K562 (cell line): ENCODE measurements at regions of chr5 and their contacts with region 1.

Region 1: DNA sequence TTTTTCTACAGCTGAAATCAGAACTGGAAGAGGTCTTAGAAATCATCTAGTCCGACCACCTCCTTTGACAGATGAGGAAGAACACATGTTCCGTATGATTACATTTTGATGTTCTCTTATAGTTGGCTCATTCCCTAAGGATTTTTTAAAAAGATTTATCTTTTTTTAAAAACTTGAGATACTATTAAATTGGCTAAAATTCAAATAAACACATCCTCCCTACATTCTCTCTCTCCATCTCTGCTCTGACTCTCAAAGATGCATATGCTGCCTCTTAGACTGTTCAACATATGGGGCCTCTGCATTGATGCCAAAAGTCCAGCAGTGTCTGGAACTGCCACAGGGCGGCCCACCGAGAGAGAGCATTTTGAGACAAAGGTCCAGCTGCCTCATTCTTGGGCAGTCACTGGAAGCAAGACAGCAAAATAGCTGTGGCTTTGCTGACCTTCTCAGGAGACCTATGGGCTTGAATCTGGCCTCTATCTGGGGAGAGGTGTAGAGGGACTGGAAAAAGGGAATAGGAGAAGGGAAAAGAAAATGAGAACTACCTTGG is 12.8 kb upstream of the TSSK1B start:
- DNase-seq: peak in 2 of 4 experiments; percentile 21 to 34
- ATAC-seq: peak; percentile 87
- H3K4me3 ChIP-seq: no peak overlapping the region
- H3K27ac ChIP-seq: no peak overlapping the region
- H3K4me1 ChIP-seq: no peaks in the 10 kb centered on the region
- H3K27me3 ChIP-seq: no peaks in the 10 kb centered on the region; a peak in 1 of 5 replicates
- CTCF ChIP-seq: peak; percentile 39 to 51 (median 47)
- EP300 ChIP-seq: no peak
- POLR2A ChIP-seq: no peak
- RAD21 ChIP-seq: peak in 1 of 2 experiments; percentile 41; a peak in 3 of 4 replicates

Region 2: GRCh38 chr5:113495422-113495841 is 47.9 kb after region 1 on chr5:
- CTCF ChIA-PET with region 1: no interaction called
- POLR2A ChIA-PET with region 1: no interaction called
- in situ Hi-C with region 1: loop called (anchors 5 kb)
- intact Hi-C with region 1: no loop called
- DNase-seq: no peak
- ATAC-seq: no peak
- H3K4me3 ChIP-seq: no peak overlapping the region
- H3K27ac ChIP-seq: no peak overlapping the region
- H3K4me1 ChIP-seq: no peaks in the 10 kb centered on the region; a peak in 1 of 5 replicates
- H3K27me3 ChIP-seq: no peaks in the 10 kb centered on the region; a peak in 1 of 5 replicates
- CTCF ChIP-seq: no peak
- EP300 ChIP-seq: no peak
- POLR2A ChIP-seq: no peak
- RAD21 ChIP-seq: no peak

Region 3: DNA sequence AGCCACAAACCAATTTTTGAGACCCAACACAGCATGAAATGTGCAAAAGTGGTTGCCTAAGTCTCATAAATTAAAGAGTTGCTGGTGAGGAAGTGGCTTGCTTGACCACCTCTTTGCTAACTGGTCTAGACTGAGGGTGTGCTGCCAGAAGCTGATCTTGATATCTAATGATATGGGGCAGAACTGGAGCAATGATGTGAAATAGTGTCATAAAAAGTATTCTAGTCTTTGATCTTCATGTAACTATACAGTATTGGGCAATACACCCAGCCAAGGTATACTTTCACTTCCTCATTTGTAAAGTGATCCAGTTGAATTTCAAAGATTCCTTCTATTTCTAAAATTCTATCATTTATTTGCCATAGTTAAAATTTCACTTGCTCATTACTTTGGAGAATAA is 60.0 kb after region 1 on chr5:
- CTCF ChIA-PET with region 1: no interaction called
- POLR2A ChIA-PET with region 1: no interaction called
- in situ Hi-C with region 1: no loop called
- intact Hi-C with region 1: loop called (anchors 5 kb)
- DNase-seq: no peak
- ATAC-seq: no peak
- H3K4me3 ChIP-seq: no peak overlapping the region
- H3K27ac ChIP-seq: no peak overlapping the region
- H3K4me1 ChIP-seq: no peaks in the 10 kb centered on the region
- H3K27me3 ChIP-seq: peaks cover 0 to 8% of the 10 kb centered on the region in 2 experiments; a peak in 3 of 5 replicates
- CTCF ChIP-seq: no peak
- EP300 ChIP-seq: no peak
- POLR2A ChIP-seq: no peak
- RAD21 ChIP-seq: no peak